Activated CD4-positive, alpha-beta memory T cell treated with anti-CD3 and anti-CD28 coated beads for 36 hours (primary cell): ENCODE measurements at regions of chr2 and their contacts with region 1.

Region 1: DNA sequence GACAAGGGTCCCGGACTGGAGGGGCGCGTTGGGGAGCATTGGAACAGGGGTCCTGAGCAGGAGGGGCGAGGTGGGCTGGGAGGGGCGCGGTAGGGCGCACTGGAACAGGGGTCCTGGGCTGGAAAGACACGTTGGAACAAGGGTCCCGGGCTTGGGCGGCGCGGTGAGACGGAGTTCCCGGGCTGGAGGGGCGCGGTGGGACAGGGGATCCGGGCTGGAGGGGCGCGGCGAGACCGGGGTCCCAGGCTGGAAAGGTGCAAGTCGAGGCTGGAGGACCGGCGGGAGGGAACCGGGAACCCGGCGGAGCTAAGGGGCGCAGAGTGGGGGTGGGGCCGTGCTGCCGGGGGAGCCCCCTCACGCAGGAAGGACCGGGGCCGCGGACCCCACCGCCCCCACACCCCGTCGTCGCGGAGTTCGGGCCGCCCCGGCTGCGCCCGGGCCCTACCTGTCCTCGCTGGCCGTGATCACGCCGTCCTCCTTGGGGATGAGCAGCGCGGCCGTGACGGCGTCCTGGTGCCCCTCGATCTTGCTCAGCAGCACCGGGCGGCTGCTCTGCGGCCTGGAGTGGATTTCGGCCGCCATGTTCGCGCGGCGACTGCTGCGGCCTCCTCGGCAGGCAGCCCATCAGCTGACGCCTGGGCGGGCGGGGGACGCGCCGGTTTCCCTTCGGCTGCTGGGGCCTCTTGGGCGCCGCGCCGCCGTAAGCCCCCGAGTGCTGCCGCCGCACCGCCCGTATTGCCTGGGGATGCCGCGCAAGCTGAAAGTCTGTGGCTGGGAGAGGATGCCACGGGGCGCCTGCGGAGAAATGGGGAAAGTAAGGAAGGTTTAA is at the start of gene WDFY1:
- DNase-seq: peak; percentile 88
- H3K4me3 Mint-ChIP-seq: peak within 1 kb of the TSS; percentile 91
- H3K27ac Mint-ChIP-seq: peak within 1 kb of the TSS; percentile 91
- H3K4me1 Mint-ChIP-seq: peaks cover 54% of the 10 kb centered on the region
- H3K27me3 Mint-ChIP-seq: no peaks in the 10 kb centered on the region
- total RNA-seq, gene WDFY1: 48.7 to 50.1 TPM

Region 2: DNA sequence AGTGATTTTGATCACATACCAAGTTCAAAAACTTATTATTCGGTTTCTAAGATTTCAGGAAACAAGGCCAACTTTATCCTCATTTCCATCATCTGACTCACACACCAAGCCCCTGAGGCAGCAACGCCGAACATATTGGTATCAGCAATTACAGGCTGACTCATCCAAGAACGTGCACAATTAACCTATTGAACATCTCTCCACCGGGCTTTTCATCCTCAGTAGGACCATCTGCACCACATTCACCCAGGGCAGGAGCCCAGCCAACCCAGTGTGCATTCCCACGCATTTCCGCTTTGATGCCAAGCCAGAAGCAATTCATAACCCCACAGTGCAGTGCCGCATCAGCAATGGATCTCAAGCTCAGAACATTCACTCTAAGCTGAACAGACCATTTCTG is 395.7 kb before region 1 on chr2:
- CTCF ChIA-PET with region 1: no interaction called
- POLR2A ChIA-PET with region 1: no interaction called
- intact Hi-C with region 1: no loop called
- DNase-seq: no peak
- H3K4me3 Mint-ChIP-seq: no peak overlapping the region
- H3K27ac Mint-ChIP-seq: no peak overlapping the region
- H3K4me1 Mint-ChIP-seq: no peaks in the 10 kb centered on the region
- H3K27me3 Mint-ChIP-seq: no peaks in the 10 kb centered on the region

Region 3: GRCh38 chr2:223882715-223883114 is 62.2 kb before region 1 on chr2:
- CTCF ChIA-PET with region 1: no interaction called
- POLR2A ChIA-PET with region 1: interaction called, 5 read pairs
- intact Hi-C with region 1: loop called (anchors 1 kb)
- DNase-seq: no peak
- H3K4me3 Mint-ChIP-seq: no peak overlapping the region
- H3K27ac Mint-ChIP-seq: no peak overlapping the region
- H3K4me1 Mint-ChIP-seq: peaks cover 13% of the 10 kb centered on the region
- H3K27me3 Mint-ChIP-seq: no peaks in the 10 kb centered on the region

Region 4: DNA sequence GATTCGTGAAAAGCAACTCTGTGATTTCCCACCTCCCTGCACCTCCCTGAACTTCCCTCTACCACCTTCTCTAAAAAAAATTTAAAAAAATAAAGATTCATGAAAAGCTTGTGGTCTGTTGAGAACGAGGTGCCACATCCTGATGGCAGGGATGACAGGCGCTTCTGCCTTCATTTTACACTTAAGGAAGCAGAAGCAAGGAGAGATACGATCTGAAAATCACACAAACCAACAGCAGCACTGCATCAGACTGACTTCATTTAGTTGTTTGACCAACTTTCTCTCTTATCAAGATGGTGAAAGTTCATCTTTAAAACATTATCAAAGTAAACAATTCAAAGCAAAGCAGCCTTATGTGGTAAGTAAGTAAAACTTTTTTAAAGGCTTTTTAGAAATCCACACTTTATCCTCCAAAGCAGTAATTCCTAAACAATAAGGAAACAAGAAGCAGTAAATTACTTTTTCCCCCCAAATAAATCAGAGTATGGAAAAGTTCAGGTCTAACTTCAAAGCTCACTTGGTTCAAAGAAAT is 15.3 kb before region 1 on chr2:
- CTCF ChIA-PET with region 1: interaction called, 3 read pairs
- POLR2A ChIA-PET with region 1: interaction called, 6 read pairs
- intact Hi-C with region 1: loop called (anchors 1 kb)
- DNase-seq: peak; percentile 59
- H3K4me3 Mint-ChIP-seq: peak overlapping the region; percentile 43
- H3K27ac Mint-ChIP-seq: peak overlapping the region; percentile 57
- H3K4me1 Mint-ChIP-seq: peaks cover 53% of the 10 kb centered on the region
- H3K27me3 Mint-ChIP-seq: no peaks in the 10 kb centered on the region

Region 5: DNA sequence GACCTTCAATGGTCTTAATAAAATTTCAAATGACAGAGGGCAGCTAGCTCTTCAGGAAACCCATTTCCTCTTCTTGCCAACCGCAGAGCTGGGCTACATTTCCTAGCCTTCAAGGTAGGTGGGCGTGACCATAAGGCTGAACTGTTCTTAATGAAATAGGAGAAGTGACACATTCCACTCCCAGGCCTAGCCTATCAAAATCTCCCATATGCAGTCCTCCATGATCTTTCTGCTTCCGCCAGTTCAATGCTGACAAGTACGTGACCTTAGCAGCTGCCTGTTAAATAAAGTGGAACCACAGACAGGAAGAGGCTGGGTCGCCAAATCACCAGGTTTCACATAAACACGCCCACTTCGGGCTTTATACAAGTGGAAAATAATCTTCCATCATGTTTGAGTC is 81.0 kb after region 1 on chr2:
- CTCF ChIA-PET with region 1: no interaction called
- POLR2A ChIA-PET with region 1: no interaction called
- intact Hi-C with region 1: loop called (anchors 5 kb)
- DNase-seq: peak; percentile 77
- H3K4me3 Mint-ChIP-seq: peak overlapping the region; percentile 30
- H3K27ac Mint-ChIP-seq: peak overlapping the region; percentile 85
- H3K4me1 Mint-ChIP-seq: peaks cover 48% of the 10 kb centered on the region
- H3K27me3 Mint-ChIP-seq: no peaks in the 10 kb centered on the region

Region 6: DNA sequence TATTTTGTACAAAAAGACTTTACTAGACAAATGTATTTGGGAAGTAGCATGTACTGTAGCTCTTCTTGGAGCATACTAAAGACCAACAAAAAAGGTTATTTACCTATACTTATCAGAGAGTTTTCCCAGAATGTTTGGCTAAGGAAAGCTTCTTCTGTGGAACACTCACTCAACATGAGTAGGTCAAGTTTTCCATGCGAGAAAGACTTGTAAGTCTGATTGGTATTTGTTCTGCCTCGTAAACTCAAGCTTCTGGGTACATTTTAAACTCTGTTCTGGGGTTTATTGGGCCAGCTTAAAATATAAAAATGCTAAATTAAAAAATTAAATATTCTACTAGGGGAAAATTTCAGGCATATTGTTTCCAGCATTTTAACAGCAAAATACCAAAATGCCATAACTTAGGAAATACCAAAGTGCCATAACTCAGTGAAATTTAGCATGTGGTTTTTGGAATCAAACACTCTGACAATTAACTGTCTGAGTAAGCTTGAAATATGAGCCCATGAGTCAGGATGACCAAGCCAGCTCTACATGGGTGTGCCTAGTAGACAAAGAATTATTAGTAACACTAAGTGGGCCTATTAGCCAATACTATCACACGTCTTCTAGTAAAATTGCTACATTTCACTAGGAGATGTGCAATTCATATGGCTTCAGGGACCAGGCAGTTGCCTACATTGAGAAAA is 141.5 kb after region 1 on chr2:
- CTCF ChIA-PET with region 1: no interaction called
- POLR2A ChIA-PET with region 1: no interaction called
- intact Hi-C with region 1: no loop called
- DNase-seq: no peak
- H3K4me3 Mint-ChIP-seq: no peak overlapping the region
- H3K27ac Mint-ChIP-seq: no peak overlapping the region
- H3K4me1 Mint-ChIP-seq: peaks cover 6% of the 10 kb centered on the region
- H3K27me3 Mint-ChIP-seq: peaks cover 2% of the 10 kb centered on the region

Region 7: DNA sequence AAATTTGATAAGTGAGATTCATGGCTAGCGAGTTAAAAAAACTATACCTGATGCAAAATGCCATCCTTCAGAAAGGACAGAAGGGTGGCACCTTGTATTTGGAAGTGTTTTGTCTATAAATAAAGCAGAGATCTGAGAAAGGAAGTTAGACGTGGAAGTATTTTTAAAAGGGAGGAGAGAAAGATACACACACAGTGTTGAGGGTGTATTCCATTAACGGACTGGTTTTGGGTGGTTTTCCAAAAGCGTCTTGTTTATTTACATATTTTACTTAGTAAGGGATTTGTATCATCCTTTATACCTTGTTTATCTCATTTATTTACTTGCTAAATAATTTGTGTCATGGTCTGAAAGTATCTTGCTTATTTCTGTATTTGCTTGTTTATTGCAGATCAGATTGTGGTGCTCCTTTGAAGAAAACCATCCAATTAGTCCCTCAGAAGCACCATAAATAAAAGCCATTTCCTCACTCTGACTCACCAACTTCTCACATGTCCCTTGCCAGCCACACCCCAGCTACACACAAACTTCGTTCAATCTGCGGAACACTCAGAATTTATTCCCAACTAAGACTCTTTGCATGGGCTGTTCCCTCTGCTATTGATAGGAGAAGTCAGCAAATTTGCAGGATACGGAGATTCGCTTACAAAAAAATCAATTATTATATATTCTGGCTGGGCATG is 366.2 kb after region 1 on chr2:
- CTCF ChIA-PET with region 1: no interaction called
- POLR2A ChIA-PET with region 1: no interaction called
- intact Hi-C with region 1: no loop called
- DNase-seq: no peak
- H3K4me3 Mint-ChIP-seq: no peak overlapping the region
- H3K27ac Mint-ChIP-seq: no peak overlapping the region
- H3K4me1 Mint-ChIP-seq: peaks cover 3% of the 10 kb centered on the region
- H3K27me3 Mint-ChIP-seq: peaks cover 22% of the 10 kb centered on the region

Region 8: GRCh38 chr2:224691563-224691962 is 746.6 kb after region 1 on chr2:
- CTCF ChIA-PET with region 1: no interaction called
- POLR2A ChIA-PET with region 1: no interaction called
- intact Hi-C with region 1: no loop called
- DNase-seq: no peak
- H3K4me3 Mint-ChIP-seq: no peak overlapping the region
- H3K27ac Mint-ChIP-seq: no peak overlapping the region
- H3K4me1 Mint-ChIP-seq: no peaks in the 10 kb centered on the region
- H3K27me3 Mint-ChIP-seq: no peaks in the 10 kb centered on the region